Left ventricle myocardium inferior (tissue), 1 donor: ENCODE measurements at regions of chr1 and their contacts with region 1.

Region 1: DNA sequence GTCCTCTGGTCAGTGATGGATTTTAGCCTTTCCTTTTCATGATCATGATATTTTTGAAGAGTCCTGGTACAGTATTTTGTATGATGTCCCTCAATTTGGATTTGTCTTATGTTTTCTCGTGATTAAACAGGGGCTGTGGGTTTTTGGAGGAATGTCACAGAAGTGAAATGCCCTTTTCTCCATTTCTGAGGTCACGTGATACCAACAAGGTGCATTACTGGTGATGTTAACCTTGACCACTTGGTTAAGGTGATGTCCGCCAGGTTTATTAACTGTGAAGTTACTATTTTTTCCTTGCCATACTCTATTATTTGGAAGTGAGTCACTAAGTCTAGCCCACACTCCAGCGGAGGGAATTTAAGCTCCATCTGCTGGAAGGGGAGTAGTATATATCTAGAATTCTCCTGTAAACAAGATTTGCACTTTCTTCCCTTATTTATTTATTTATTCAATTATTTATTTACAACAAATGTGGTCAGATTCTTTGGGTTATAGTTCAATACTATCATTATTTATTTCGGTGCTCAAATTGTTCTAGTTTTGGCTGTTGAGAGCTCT is 123.4 kb downstream of the HIVEP3 start:
- DNase-seq: no peak
- H3K4me3 ChIP-seq: no peak overlapping the region
- H3K27ac ChIP-seq: no peak overlapping the region
- H3K4me1 ChIP-seq: peaks cover 10% of the 10 kb centered on the region
- H3K27me3 ChIP-seq: no peaks in the 10 kb centered on the region
- CTCF ChIP-seq: peak; percentile 48

Region 2: DNA sequence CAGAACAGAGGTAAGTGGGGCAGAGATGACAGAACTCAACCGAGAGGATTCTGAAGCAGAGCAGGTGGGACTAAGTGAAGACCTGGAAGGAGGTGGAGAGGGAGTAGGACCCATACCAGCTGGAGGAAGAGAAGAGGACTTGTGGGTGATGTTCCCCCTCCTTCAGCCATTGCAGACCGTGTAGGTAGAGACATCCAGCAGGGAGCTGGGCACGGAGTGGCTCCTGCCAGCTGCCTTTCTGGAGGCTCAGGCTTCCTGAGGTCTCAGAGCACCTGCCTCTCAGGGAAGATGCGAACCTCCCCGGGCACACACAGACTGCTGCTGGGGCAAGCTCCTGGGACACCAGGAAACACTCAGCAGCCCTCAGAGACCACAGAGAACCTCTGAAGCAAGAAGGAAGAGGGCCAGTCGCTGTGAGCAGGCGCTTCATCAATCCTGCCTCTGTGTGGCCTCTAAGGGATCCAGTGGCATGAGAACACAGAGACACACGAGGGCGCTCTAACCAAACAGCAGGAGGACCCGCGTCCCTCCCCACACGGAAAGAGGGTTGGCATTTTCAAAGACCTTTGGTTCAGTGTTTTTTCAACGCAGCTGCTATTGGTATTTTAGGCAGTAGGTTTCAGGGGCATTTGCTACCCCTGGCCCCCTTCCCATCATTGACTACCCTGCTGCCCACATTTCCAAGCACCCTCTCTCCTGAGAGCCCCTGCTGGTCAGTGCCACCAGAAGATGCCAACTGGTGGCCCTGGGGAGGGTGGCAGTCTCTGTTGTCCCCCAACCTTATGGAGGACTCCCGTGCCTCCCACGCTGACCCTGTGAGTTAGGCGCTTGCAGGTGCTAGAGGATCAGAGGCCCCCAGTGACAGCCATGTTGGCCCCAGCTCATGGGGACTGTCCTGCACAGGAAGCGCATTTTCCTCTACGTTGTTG is 221.2 kb before region 1 on chr1:
- intact Hi-C with region 1: loop called (anchors 10 kb)
- DNase-seq: peak; percentile 75
- H3K4me3 ChIP-seq: no peak overlapping the region
- H3K27ac ChIP-seq: no peak overlapping the region
- H3K4me1 ChIP-seq: peaks cover 4% of the 10 kb centered on the region
- H3K27me3 ChIP-seq: no peaks in the 10 kb centered on the region
- CTCF ChIP-seq: peak; percentile 94